ENCODE measurements at regions of chr15 and their contacts with region 1.

Region 1: GRCh38 chr15:82540055-82540983 is at the start of gene RPS17:
- DNase-seq: peak; percentile 88 to 99 (median 94)

Region 2: GRCh38 chr15:82177291-82178010 is 362.9 kb before region 1 on chr15:
- intact Hi-C with region 1: no loop called
- DNase-seq: no peak

Region 3: DNA sequence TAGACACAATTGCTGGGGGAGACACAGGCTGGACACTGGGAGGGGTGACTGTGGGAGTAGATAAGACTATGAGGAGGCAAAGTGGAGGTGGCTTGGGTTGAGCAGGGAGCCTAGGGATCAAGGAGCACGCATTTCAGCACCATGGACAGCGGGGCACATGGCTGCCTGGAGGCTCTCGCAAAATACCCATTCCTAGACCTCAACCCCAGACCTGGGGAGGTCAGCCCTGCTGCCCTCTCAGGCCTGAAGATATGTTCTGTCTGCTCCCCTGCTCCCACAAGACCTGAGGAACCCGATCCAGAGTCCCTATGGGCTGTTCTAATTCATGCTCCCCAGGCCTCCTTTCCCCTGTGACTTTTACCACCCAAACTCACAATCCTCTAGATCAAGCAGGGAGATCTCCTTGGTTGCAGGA is 122.9 kb after region 1 on chr15:
- intact Hi-C with region 1: no loop called
- DNase-seq: peak in 3 of 10 donors; percentile 40 to 65 (median 47)

Region 4: GRCh38 chr15:82709421-82710207 is 169.3 kb after region 1 on chr15 and contains the start of gene AP3B2:
- intact Hi-C with region 1: loop called (anchors 5 kb)
- DNase-seq: peak; percentile 30 to 97 (median 78)

Region 5: GRCh38 chr15:82730022-82730530 is 189.8 kb after region 1 on chr15:
- intact Hi-C with region 1: no loop called
- DNase-seq: no peak